Vagina (tissue), 2 donors: ENCODE measurements at regions of chr9 and their contacts with region 1.

Region 1: GRCh38 chr9:12813960-12814876 is 39.4 kb downstream of the LURAP1L start:
- DNase-seq: no peak
- H3K4me3 ChIP-seq: no peak overlapping the region
- H3K27ac ChIP-seq: peak overlapping the region; percentile 79
- H3K4me1 ChIP-seq: peaks cover 54% of the 10 kb centered on the region
- H3K27me3 ChIP-seq: no peaks in the 10 kb centered on the region
- CTCF ChIP-seq: peak in 1 of 3 experiments; percentile 23
- POLR2A ChIP-seq: no peak

Region 2: GRCh38 chr9:12759761-12760160 is 54.5 kb before region 1 on chr9:
- intact Hi-C with region 1: loop called (anchors 10 kb)
- DNase-seq: no peak
- H3K4me3 ChIP-seq: no peak overlapping the region
- H3K27ac ChIP-seq: no peak overlapping the region
- H3K4me1 ChIP-seq: no peaks in the 10 kb centered on the region
- H3K27me3 ChIP-seq: no peaks in the 10 kb centered on the region
- CTCF ChIP-seq: no peak
- POLR2A ChIP-seq: no peak

Region 3: DNA sequence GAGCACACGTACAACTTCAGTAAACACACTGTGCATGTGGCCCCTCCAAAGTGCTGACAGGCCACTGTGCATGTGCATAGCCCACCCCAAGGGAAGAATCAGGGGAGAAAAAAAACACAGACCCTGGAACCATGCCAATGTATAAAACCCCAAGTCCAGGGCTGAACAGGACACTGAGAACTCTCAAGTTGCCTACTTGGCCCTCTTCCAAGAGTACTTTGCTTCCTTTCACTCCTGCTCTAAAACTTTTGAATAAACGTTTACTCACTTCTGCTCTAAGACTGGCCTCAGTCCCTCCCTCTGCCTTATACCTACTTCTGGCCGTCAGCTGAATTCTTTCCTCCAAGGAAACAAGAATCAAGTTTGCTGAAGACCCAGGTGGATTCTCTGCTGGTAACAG is 1577.4 kb after region 1 on chr9:
- intact Hi-C with region 1: no loop called
- DNase-seq: no peak
- H3K4me3 ChIP-seq: no peak overlapping the region
- H3K27ac ChIP-seq: no peak overlapping the region
- H3K4me1 ChIP-seq: no peaks in the 10 kb centered on the region
- H3K27me3 ChIP-seq: no peaks in the 10 kb centered on the region
- CTCF ChIP-seq: no peak
- POLR2A ChIP-seq: no peak